HepG2 (cell line): ENCODE measurements at regions of chr1 and their contacts with region 1.

Region 1: DNA sequence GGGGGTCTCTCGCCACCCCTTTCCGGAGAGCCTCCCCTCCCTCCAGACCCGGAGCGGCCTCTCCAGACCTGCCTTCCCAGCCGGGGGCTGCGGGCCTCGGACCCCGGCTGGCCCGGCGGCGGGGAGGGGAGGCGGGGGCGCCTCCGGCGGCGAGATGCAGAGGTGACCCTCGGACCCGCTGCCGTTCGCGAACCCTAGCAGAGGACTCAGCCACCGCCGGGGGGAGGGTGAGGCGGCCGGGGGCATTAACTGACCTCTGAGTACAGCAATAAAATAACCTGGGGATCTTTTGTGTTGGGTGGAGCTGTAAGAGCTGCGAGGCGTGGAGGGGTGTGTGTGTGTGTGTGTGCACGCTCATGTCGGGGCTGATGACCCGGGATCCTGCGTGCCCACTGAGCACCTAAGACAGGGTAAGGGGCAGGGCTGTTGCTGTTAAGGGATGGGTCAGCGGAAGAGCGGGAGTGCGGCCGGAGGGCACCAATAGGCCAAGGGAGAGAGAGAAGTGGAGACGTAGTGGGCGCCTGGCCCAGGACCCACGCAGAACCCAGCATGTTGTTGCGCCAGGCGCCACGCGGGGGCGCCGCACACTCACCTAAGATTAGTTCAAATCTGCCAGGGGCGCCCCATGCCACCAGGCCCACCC is 6.3 kb downstream of the HAPLN2 start:
- DNase-seq: no peak
- ATAC-seq: peak; percentile 48
- H3K4me3 ChIP-seq: peak overlapping the region; percentile 43 to 69 (median 44); a peak in 5 of 6 replicates
- H3K27ac ChIP-seq: no peak overlapping the region
- H3K4me1 ChIP-seq: peaks cover 34% of the 10 kb centered on the region
- H3K27me3 ChIP-seq: peaks cover 13 to 40% of the 10 kb centered on the region in 2 experiments
- CTCF ChIP-seq: peak; percentile 79
- EP300 ChIP-seq: no peak
- POLR2A ChIP-seq: no peak
- RAD21 ChIP-seq: peak; percentile 48; the same call in 1 of the 2 replicates

Region 2: GRCh38 chr1:156641761-156642264 is 16.3 kb after region 1 on chr1 and contains the start of gene BCAN:
- CTCF ChIA-PET with region 1: no interaction called
- POLR2A ChIA-PET with region 1: no interaction called
- in situ Hi-C with region 1: no loop called
- intact Hi-C with region 1: loop called (anchors 1 kb)
- DNase-seq: no peak
- ATAC-seq: no peak
- H3K4me3 ChIP-seq: no peak within 1 kb of the TSS
- H3K27ac ChIP-seq: no peak within 1 kb of the TSS
- H3K4me1 ChIP-seq: peaks cover 17% of the 10 kb centered on the region
- H3K27me3 ChIP-seq: peaks cover 2 to 11% of the 10 kb centered on the region in 2 experiments; a peak in 3 of 5 replicates
- CTCF ChIP-seq: no peak
- EP300 ChIP-seq: no peak
- POLR2A ChIP-seq: no peak
- RAD21 ChIP-seq: no peak
- total RNA-seq, gene BCAN: not detected in 2 replicates

Region 3: DNA sequence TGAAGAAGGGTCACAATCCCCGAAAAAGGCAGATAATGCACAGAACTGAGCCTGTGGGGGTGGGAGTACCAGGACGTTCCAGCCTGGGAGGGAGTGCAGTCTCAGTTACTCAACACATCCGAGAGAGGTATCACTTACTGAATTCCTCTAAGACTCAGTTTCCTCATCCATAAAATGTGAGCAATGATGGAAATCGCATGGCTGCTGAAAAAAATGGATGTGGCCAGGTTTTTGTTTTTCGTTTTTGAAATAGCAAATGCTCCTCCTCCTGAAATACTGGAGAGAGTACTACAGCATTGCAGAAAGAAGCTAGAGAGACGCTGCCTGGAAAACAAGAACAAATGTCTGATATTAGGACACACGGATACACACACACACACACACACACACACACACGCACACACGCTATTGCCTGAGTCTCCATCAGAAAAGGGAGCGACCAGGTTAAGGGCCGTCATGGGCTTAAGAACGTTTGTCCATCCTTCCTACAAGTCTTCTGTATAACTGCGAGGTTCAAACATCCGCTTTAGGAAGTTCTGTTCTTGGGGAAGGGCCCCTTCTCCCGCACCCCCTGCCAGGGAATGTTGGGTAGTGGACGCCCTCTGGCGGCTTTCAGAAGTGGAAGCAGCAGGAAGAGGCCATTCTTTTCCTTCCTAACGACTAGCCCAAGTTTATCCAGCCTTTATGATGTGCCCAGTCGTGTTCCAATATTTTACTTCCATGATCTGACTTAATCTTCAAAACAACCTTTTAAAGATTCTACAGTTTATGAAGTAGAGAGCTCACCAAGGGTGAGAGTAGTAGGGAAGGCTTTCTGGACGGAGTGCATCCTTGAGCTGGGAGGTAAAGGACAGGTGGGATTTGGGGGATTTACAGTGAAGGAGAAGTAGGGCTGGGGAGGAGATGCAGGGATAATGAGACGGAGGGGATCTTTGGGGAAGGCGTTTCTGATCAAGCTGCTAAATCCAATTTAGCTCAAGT is 52.3 kb after region 1 on chr1:
- CTCF ChIA-PET with region 1: interaction called, 18 read pairs
- POLR2A ChIA-PET with region 1: no interaction called
- in situ Hi-C with region 1: no loop called
- intact Hi-C with region 1: loop called (anchors 2 kb)
- DNase-seq: peak; percentile 72
- ATAC-seq: peak; percentile 60
- H3K4me3 ChIP-seq: peak overlapping the region; percentile 40 to 63 (median 58); a peak in 5 of 6 replicates
- H3K27ac ChIP-seq: no peak overlapping the region
- H3K4me1 ChIP-seq: peaks cover 62% of the 10 kb centered on the region
- H3K27me3 ChIP-seq: peaks cover 2 to 32% of the 10 kb centered on the region in 2 experiments
- CTCF ChIP-seq: peak; percentile 96
- EP300 ChIP-seq: no peak
- POLR2A ChIP-seq: no peak
- RAD21 ChIP-seq: peak; percentile 92